ENCODE measurements at regions of chr12 and their contacts with region 1.

Region 1: GRCh38 chr12:14995583-14996425 is 23.0 kb downstream of the PDE6H start:
- DNase-seq: peak; percentile 36
- H3K4me3 ChIP-seq: no peak overlapping the region
- H3K27me3 ChIP-seq: no peaks in the 10 kb centered on the region
- CTCF ChIP-seq: peak; percentile 51

Region 2: GRCh38 chr12:14723763-14724162 is 272.0 kb before region 1 on chr12:
- CTCF ChIA-PET with region 1: interaction called, 10 read pairs
- POLR2A ChIA-PET with region 1: no interaction called
- DNase-seq: no peak
- H3K4me3 ChIP-seq: no peak overlapping the region
- H3K27me3 ChIP-seq: no peaks in the 10 kb centered on the region; the same call in 1 of the 2 replicates
- CTCF ChIP-seq: peak; percentile 75

Region 3: DNA sequence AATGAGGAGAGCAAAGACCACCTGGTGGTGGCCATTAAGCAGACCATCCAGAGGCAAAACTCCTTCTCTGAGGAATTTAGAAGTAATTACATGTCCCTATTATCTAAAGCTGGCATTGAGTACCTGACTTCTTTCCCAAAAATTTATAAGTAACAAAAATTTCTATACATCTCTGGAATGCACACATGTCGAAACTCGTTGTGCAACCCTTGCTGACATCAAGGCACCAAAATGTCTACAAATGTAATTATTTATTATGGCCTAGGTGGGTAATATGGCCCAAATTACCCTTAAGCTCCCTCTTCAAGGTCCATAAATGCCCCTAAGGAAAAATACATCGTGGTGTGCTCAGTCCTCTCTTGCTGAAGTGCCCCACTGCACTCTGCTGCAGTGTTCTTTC is 256.3 kb before region 1 on chr12:
- CTCF ChIA-PET with region 1: no interaction called
- POLR2A ChIA-PET with region 1: no interaction called
- DNase-seq: no peak
- H3K4me3 ChIP-seq: no peak overlapping the region
- H3K27me3 ChIP-seq: no peaks in the 10 kb centered on the region; the same call in 1 of the 2 replicates
- CTCF ChIP-seq: no peak

Region 4: DNA sequence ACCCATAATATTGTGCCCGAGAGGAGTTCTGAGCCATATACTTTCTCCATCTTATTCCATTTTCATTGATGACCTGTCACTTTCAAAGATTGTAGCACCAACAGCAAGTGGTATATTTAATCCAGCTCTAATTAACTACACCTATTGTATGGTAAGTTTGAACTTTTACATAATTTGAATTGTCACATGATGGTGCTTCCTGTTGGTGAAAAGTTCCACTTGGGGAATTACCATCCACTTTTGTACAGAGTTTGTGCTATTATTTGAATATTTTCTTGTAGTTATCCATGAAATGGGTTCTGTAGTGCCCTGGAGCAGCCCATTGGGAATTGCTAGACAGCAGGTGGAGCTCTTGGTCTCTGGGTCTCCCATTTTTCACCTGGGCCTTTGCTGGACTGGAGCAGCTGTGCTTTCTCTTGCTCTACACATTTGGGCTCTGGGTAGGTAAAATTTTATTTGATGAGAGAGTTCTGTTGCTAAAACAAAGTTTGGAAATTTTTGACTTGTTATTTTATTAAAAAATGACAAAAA is 184.8 kb before region 1 on chr12:
- CTCF ChIA-PET with region 1: interaction called, 19 read pairs
- POLR2A ChIA-PET with region 1: interaction called, 9 read pairs
- DNase-seq: no peak
- H3K4me3 ChIP-seq: no peak overlapping the region
- H3K27me3 ChIP-seq: no peaks in the 10 kb centered on the region
- CTCF ChIP-seq: peak; percentile 59

Region 5: DNA sequence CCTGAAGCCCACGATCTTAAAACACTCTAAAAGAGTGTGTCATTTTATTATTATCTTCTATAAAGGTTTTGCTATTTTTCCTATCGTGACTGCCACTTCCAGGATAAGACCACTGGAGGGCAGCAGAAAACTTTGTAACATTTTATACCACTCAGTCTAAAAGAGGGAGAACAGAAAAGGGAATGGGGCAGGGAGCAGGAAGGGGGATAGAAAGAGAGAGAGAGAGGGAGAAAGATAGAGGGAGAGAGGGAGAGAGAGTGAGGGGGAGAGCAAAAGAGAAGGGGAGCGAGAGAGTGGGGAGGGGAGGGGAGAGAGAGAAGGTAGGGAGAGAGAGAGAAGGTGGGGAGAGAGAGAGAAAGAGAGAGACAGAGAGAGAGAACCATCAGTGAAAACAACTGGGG is 150.5 kb before region 1 on chr12:
- CTCF ChIA-PET with region 1: interaction called, 83 read pairs
- POLR2A ChIA-PET with region 1: no interaction called
- DNase-seq: no peak
- H3K4me3 ChIP-seq: no peak overlapping the region
- H3K27me3 ChIP-seq: no peaks in the 10 kb centered on the region
- CTCF ChIP-seq: peak; percentile 77

Region 6: GRCh38 chr12:15131431-15131830 is 135.6 kb after region 1 on chr12:
- CTCF ChIA-PET with region 1: no interaction called
- POLR2A ChIA-PET with region 1: no interaction called
- DNase-seq: no peak
- H3K4me3 ChIP-seq: no peak overlapping the region
- H3K27me3 ChIP-seq: no peaks in the 10 kb centered on the region
- CTCF ChIP-seq: no peak

Measured in BJ (cell line).